OCI-LY7 (cell line): ENCODE measurements at regions of chr1 and their contacts with region 1.

Region 1: DNA sequence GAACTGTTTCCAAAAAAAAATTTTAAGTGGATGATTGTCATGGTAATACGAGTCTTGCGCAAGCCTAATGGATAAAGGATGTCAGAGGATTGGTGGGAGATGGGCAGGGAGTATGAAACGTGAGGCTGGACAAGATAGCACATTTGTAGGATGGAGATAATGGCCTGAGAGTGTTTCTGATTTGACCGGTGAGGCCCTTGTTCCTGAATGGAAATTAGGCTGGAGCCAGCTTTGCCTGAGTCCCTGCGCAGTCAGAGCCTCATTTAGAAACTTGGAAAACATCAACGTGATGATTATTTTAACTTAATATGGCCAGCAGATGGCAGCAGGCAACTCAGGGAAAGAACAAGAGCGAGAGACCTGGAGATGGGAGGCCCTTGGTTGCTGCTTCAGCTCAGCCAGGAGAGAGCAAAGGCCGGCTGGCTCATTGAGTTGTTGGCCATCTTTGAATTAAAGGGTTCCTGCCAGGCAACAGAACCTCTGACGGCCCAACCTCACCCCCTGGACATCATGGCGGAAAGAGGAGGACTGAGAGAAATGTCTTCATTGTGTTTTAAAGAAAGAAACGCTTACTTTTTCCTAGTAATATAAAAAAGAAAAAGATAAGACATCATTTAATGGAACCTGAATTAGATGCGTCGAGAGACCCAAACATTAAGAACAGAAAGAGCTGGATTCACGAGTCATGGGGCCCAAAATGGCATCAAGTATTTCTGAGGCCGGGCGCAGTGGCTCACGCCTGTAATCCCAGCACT is 80.3 kb downstream of the SELENOF start:
- DNase-seq: peak; percentile 92
- H3K4me3 ChIP-seq: peak overlapping the region; percentile 73
- H3K27ac ChIP-seq: peak overlapping the region; percentile 66
- H3K4me1 ChIP-seq: peaks cover 35% of the 10 kb centered on the region
- CTCF ChIP-seq: peak; percentile 87

Region 2: DNA sequence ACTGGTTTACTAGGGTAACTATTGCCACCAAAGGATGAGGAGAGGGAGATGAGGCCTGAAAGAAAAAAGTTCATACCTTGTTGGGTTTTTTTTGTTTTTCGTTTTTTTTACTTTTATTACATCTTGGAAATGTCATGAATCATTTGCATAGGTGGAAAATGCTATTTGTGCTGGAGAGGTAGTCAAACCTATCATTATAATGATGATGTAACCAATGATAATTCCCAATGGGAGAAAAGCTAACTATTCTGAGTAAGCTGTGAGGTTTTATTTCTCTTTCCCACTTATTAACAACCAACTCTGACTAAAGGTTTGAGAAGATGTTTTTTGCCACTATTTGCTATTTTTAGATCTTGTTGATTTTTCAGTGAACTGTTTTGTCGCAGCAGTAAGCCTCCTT is 100.3 kb before region 1 on chr1:
- CTCF ChIA-PET with region 1: no interaction called
- POLR2A ChIA-PET with region 1: no interaction called
- intact Hi-C with region 1: no loop called
- DNase-seq: no peak
- H3K4me3 ChIP-seq: no peak overlapping the region
- H3K27ac ChIP-seq: no peak overlapping the region
- H3K4me1 ChIP-seq: no peaks in the 10 kb centered on the region
- CTCF ChIP-seq: no peak

Region 3: DNA sequence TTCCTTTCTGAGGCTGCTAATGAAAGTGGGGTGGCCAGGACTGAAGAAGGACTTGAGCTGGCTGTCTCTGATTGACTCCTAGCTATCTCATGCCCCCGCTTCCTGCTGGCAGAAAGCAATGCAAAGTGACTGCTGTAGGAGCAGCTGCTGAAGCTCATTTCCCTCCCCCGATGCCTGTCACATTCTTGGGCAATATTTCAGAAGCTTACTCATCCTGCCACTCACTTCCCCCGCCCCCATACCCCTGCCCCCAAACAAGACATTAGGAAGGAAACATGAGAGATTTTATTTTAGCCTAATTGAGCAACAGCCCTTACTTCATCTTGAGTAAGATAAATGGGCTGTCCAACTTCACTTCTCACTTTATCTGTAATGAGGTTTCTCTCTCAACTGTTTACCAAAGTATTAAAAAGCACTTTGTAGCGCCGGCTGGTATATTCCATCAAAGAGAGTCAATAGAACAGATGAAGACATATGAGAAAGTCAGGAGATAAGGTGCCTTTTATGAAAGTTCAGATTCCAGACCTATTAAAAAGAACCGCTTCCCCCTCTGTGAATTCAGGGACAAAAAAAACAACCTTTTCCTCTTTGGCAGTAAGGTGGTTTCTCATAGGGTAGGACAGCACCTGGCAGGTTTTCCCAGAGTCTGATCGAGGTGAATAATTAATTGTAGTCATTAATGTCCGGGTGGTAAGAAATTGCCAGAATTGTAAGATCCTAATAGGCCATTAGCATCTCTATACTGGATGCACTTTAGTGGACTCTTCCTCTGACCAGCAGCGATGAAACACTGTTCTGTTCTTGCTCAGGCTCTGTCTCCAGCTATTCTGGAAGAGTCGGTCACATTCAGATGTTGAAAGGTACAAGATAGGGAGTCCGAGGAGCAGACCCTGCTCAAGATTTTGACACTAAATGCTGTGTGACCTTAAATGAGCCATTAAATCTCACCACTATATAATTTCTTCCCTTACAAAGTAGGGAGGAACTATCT is 59.0 kb before region 1 on chr1:
- CTCF ChIA-PET with region 1: no interaction called
- POLR2A ChIA-PET with region 1: interaction called, 9 read pairs
- intact Hi-C with region 1: loop called (anchors 1 kb)
- DNase-seq: peak; percentile 93
- H3K4me3 ChIP-seq: peak overlapping the region; percentile 56
- H3K27ac ChIP-seq: peak overlapping the region; percentile 89
- H3K4me1 ChIP-seq: peaks cover 47% of the 10 kb centered on the region
- CTCF ChIP-seq: no peak